HCT116 (cell line): ENCODE measurements at regions of chr16 and their contacts with region 1.

Region 1: GRCh38 chr16:80824718-80825364 is 20.4 kb upstream of the CDYL2 start:
- DNase-seq: peak; percentile 64
- ATAC-seq: peak; percentile 58
- H3K4me3 ChIP-seq: no peak overlapping the region
- H3K27ac ChIP-seq: no peak overlapping the region
- H3K4me1 ChIP-seq: no peaks in the 10 kb centered on the region
- H3K27me3 ChIP-seq: 0 out of 2 replicates have a peak, but pooled peaks cover 8% of the 10 kb centered on the region
- CTCF ChIP-seq: peak; percentile 33 to 87 (median 84); a peak in 4 of 6 replicates
- POLR2A ChIP-seq: no peak
- RAD21 ChIP-seq: peak; percentile 62

Region 2: DNA sequence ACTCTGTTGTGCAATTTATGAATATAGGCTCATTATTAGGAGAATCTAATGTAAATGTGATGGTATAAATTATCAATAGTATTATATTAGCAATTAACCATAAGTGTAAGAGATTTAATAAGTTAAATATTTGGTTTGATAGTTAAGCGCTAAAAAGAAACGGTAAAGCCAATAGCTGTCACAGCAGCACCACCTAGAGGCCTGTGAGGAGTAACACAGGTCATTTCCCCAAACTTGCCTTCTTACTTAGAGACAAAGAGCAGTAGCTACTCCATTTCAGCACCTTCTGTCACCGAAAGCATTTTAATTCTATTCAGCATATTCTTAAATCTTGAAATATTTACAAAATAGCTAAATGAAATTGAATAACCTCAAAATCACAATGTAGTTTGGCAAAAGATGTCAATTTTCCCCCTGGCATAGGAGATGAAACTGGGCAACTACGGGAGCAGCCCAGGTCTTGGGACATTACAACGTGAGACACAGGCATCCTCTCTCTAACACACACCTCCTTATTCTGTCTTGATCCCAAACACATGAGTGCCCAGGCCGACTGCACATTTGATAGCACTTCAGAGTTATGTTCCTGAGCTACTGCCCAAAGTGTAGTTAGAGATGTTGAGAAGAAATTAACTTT is 298.3 kb before region 1 on chr16:
- CTCF ChIA-PET with region 1: no interaction called
- POLR2A ChIA-PET with region 1: no interaction called
- RAD21 ChIA-PET with region 1: no interaction called
- intact Hi-C with region 1: loop called (anchors 2 kb)
- DNase-seq: peak; percentile 38
- ATAC-seq: peak; percentile 73
- H3K4me3 ChIP-seq: no peak overlapping the region
- H3K27ac ChIP-seq: no peak overlapping the region
- H3K4me1 ChIP-seq: no peaks in the 10 kb centered on the region
- H3K27me3 ChIP-seq: no peaks in the 10 kb centered on the region
- CTCF ChIP-seq: peak; percentile 50 to 86 (median 80); a peak in 5 of 6 replicates
- POLR2A ChIP-seq: no peak
- RAD21 ChIP-seq: peak; percentile 74

Region 3: GRCh38 chr16:80971819-80972218 is 147.0 kb after region 1 on chr16:
- CTCF ChIA-PET with region 1: no interaction called
- POLR2A ChIA-PET with region 1: no interaction called
- RAD21 ChIA-PET with region 1: no interaction called
- intact Hi-C with region 1: no loop called
- DNase-seq: no peak
- ATAC-seq: no peak
- H3K4me3 ChIP-seq: no peak overlapping the region
- H3K27ac ChIP-seq: no peak overlapping the region
- H3K4me1 ChIP-seq: 0 out of 4 replicates have a peak, but pooled peaks cover 0 to 6% of the 10 kb centered on the region in 2 experiments
- H3K27me3 ChIP-seq: no peaks in the 10 kb centered on the region
- CTCF ChIP-seq: no peak
- POLR2A ChIP-seq: no peak
- RAD21 ChIP-seq: no peak